T-cell (primary cell): ENCODE measurements at regions of chr14 and their contacts with region 1.

Region 1: DNA sequence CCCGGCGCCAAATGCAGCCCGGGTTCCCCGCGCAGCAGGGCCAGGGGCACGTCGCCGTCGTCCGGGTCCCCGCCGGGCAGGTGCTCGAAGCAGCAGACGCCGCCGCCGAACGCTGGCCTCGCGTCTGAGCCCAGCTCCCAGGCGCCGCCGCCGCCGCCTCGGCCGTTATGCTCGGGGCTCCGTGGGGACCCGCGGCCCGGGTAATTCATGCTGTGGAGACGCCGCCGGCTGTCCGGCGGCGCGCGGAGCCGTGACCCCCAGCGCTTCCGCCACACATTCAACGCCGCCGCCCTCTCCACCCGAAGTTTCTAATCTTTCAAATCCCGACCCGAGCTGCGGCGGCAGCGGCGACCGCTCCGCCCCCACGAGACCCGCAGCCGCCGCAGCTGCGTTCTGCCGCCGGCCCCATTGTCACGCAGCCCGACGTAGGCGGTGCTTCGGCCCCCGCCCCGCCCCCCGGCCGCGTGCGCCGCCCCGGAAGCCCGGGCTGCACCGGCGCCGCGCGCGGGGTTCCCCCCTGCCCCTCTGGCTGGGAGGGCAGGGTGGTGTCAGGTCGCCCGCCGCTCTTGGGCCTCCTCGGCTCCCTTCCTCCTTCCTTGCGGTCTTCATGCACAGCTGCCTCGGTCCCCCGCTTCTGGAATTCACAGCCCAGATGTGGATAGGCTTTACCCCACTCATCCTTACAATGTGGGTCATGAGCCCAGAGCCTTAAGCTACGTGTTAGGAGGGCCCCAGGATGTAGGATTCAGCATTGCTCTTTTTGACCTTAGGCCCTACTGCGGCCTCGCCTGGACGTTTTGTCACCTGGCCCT is at the start of gene DDHD1:
- DNase-seq: peak; percentile 63 to 95 (median 81)
- ATAC-seq: peak; percentile 83 to 89 (median 86)
- H3K4me3 ChIP-seq: peak within 1 kb of the TSS; percentile 93 to 97
- H3K4me3 Mint-ChIP-seq: peak within 1 kb of the TSS; percentile 96 to 99 (median 98)
- H3K27ac ChIP-seq: peak within 1 kb of the TSS; percentile 96
- H3K27ac Mint-ChIP-seq: peak within 1 kb of the TSS; percentile 97 to 98
- H3K4me1 ChIP-seq: peaks cover 26 to 42% of the 10 kb centered on the region in 2 experiments
- H3K4me1 Mint-ChIP-seq: peaks cover 46 to 55% (median 48%) of the 10 kb centered on the region in 3 donors
- H3K27me3 ChIP-seq: no peaks in the 10 kb centered on the region
- H3K27me3 Mint-ChIP-seq: no peaks in the 10 kb centered on the region
- total RNA-seq, gene DDHD1: 36.6 to 69.6 (median 45.4) TPM

Region 2: GRCh38 chr14:52325126-52325525 is 828.0 kb before region 1 on chr14:
- CTCF ChIA-PET with region 1: no interaction called
- POLR2A ChIA-PET with region 1: no interaction called
- DNase-seq: peak in 3 of 35 experiments; percentile 10 to 50 (median 14)
- ATAC-seq: peak; percentile 63 to 92 (median 80)
- H3K4me3 ChIP-seq: no peak overlapping the region
- H3K4me3 Mint-ChIP-seq: peak overlapping the region in 2 of 3 donors; percentile 4 to 55
- H3K27ac ChIP-seq: peak overlapping the region; percentile 26
- H3K27ac Mint-ChIP-seq: peak overlapping the region; percentile 78 to 79
- H3K4me1 ChIP-seq: peaks cover 0 to 9% of the 10 kb centered on the region in 2 experiments
- H3K4me1 Mint-ChIP-seq: peaks cover 60 to 91% (median 62%) of the 10 kb centered on the region in 3 donors
- H3K27me3 ChIP-seq: no peaks in the 10 kb centered on the region
- H3K27me3 Mint-ChIP-seq: no peaks in the 10 kb centered on the region

Region 3: GRCh38 chr14:53109105-53110041 is 43.7 kb before region 1 on chr14:
- CTCF ChIA-PET with region 1: interaction called, 3 to 23 read pairs
- POLR2A ChIA-PET with region 1: interaction called, 5 to 16 read pairs
- DNase-seq: peak in 32 of 35 experiments; percentile 15 to 79 (median 36)
- ATAC-seq: peak; percentile 65 to 85 (median 78)
- H3K4me3 ChIP-seq: peak overlapping the region; percentile 34 to 72
- H3K4me3 Mint-ChIP-seq: no peak overlapping the region
- H3K27ac ChIP-seq: peak overlapping the region; percentile 78
- H3K27ac Mint-ChIP-seq: no peak overlapping the region
- H3K4me1 ChIP-seq: peaks cover 22 to 25% of the 10 kb centered on the region in 2 experiments
- H3K4me1 Mint-ChIP-seq: peaks cover 7 to 19% (median 16%) of the 10 kb centered on the region in 3 donors
- H3K27me3 ChIP-seq: no peaks in the 10 kb centered on the region
- H3K27me3 Mint-ChIP-seq: no peaks in the 10 kb centered on the region

Region 4: DNA sequence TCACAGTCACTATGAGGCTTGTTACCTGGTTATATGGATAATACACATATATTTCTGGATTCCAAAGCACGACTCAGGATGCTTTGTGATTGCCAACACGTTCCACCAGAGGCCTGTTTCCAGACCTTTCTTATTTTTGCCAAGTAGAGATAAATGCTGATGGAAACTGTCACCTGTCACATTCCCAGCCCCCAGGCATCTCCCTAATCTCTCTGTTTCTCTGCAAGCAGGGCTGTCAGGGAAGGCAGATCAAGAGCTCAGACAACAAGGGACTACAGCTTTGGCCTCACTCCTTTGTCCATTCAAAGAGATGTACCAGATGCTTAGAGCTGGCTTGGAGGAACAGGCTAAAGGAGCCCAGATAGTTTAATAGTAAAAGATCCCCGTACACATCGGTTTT is 21.8 kb after region 1 on chr14:
- CTCF ChIA-PET with region 1: no interaction called
- POLR2A ChIA-PET with region 1: no interaction called
- DNase-seq: no peak
- ATAC-seq: no peak
- H3K4me3 ChIP-seq: no peak overlapping the region
- H3K4me3 Mint-ChIP-seq: no peak overlapping the region
- H3K27ac ChIP-seq: no peak overlapping the region
- H3K27ac Mint-ChIP-seq: no peak overlapping the region
- H3K4me1 ChIP-seq: no peaks in the 10 kb centered on the region
- H3K4me1 Mint-ChIP-seq: peaks cover 0 to 1% (median under 1%) of the 10 kb centered on the region in 3 donors
- H3K27me3 ChIP-seq: no peaks in the 10 kb centered on the region
- H3K27me3 Mint-ChIP-seq: no peaks in the 10 kb centered on the region

Region 5: GRCh38 chr14:53217295-53217994 is 64.3 kb after region 1 on chr14:
- CTCF ChIA-PET with region 1: interaction called, 5 to 10 read pairs
- POLR2A ChIA-PET with region 1: interaction called, 3 to 4 read pairs
- DNase-seq: peak; percentile 42 to 79 (median 59)
- ATAC-seq: peak; percentile 90 to 99 (median 94)
- H3K4me3 ChIP-seq: peak overlapping the region; percentile 56 to 60
- H3K4me3 Mint-ChIP-seq: peak overlapping the region; percentile 77 to 85 (median 80)
- H3K27ac ChIP-seq: no peak overlapping the region
- H3K27ac Mint-ChIP-seq: peak overlapping the region; percentile 40 to 60
- H3K4me1 ChIP-seq: peaks cover 0 to 11% of the 10 kb centered on the region in 2 experiments
- H3K4me1 Mint-ChIP-seq: peaks cover 6 to 11% (median 9%) of the 10 kb centered on the region in 3 donors
- H3K27me3 ChIP-seq: no peaks in the 10 kb centered on the region
- H3K27me3 Mint-ChIP-seq: no peaks in the 10 kb centered on the region

Region 6: DNA sequence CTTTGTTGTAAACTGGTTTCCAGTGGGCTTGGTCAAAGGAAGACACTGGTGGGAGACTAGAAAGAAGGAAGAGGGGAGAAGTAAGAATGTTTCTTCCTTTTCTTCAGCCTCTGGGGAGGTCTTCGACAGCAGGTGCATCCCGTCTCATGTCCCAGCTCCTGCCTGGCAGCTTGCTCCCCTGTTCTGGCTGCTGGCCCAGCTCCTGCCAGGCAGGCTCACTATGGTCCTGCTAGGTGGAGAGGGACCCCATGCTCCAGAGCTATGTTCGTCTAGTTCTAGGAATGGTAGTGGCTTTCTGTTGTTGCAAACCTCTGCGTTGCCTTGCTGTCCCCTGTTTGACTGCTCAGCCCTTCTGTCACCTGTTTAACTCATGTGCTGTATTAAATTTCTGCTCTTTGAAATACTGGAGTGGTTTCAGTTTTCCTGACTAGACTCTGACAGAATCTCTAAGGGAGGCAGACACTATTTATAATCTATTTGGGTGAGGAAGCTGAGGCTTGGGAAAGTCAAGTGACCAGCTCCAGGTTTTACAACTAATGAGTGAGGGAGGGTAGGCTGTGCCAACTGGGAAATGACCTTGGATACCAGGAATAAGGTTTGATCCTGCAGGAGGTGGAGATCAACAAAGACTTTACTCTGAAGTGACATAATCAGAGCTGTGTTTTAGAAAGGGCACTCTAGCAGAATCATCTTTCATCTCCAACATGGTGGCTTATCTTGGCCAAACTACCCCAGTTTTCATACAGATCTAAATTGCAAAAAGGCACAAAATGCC is 94.7 kb after region 1 on chr14:
- CTCF ChIA-PET with region 1: no interaction called
- POLR2A ChIA-PET with region 1: no interaction called
- DNase-seq: no peak
- ATAC-seq: no peak
- H3K4me3 ChIP-seq: no peak overlapping the region
- H3K4me3 Mint-ChIP-seq: no peak overlapping the region
- H3K27ac ChIP-seq: no peak overlapping the region
- H3K27ac Mint-ChIP-seq: no peak overlapping the region
- H3K4me1 ChIP-seq: no peaks in the 10 kb centered on the region
- H3K4me1 Mint-ChIP-seq: no peaks in the 10 kb centered on the region
- H3K27me3 ChIP-seq: peaks cover 0 to 5% of the 10 kb centered on the region in 2 experiments
- H3K27me3 Mint-ChIP-seq: no peaks in the 10 kb centered on the region

Region 7: DNA sequence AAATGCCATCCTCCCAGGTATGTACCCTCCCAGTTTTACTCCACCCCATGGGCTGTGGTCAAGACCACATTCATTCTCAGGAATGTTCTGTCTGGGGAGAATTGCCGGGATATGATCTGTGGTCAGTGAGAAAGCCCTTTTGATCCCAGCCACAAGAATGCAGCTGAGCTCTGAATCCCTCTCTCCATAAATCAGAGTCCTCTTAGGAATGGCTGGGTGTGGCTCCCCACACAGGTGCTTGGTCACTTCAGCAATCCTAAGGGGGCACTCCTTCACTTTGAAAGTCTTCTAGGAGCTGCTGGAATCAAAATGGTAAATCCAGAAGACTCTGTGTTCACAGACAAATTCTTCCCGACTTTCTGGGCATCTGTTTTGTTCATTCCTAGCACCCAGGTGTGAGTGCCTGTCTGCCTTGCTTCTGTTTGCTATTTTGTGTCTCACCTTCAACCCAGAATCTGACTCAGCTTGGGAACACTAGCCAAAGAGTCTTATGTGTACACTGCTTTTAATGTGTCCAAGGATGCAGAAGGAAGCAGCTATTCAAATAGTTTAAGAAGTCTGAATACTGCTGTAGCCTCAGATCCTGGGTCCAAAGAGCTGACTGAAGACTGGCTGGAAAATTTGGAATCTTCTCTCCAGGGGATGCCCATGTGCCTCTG is 1099.1 kb after region 1 on chr14:
- CTCF ChIA-PET with region 1: no interaction called
- POLR2A ChIA-PET with region 1: no interaction called
- DNase-seq: no peak
- ATAC-seq: no peak
- H3K4me3 ChIP-seq: no peak overlapping the region
- H3K4me3 Mint-ChIP-seq: no peak overlapping the region
- H3K27ac ChIP-seq: no peak overlapping the region
- H3K27ac Mint-ChIP-seq: no peak overlapping the region
- H3K4me1 ChIP-seq: no peaks in the 10 kb centered on the region
- H3K4me1 Mint-ChIP-seq: no peaks in the 10 kb centered on the region
- H3K27me3 ChIP-seq: peaks cover 0 to 6% of the 10 kb centered on the region in 2 experiments
- H3K27me3 Mint-ChIP-seq: peaks cover 18 to 28% of the 10 kb centered on the region in 2 donors